ENCODE measurements at regions of chr2 and their contacts with region 1.

Region 1: DNA sequence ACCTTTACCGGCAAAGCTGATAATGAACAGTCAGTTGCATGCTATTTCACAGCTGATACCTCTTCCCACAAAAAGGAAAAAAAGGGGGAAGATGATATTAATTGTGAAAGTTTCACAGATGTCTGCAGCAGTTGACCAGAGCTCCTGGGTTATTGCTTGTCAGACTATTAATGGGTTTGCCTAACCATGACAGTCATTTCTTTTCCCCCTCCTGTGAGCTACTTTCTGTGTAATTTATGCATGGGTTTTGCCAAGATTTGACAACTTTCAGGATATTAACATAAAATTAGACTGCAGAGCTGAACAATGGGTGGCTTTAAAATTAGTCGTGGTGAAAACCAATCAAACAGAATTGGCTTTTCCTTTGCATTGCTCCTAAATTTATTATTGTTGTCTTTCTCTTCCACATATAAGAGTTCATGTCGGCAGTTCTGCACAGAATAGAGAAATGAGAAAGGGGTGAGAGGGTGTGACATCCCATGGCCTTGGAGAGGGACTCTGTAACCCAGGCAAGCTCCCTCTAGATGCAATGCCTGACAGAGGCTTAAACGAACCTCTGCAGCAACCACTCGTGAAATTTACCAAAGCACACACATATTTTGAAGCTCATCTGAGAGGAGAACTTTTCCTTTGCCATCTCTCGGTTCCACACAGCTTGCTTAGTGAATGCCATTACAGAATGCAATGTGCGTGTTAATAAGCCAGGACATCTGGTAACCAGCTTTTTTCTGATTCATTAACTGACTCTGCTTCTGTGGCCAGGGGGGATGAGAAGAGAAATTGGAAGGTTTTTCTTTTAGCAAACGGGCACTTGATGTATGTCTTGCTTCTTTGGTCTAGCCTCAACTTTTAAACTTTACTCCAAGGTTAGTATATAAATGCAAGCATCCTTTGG is 82.2 kb upstream of the ITGA4 start:
- DNase-seq: no peak
- H3K4me3 Mint-ChIP-seq: no peak overlapping the region
- H3K27ac Mint-ChIP-seq: no peak overlapping the region
- H3K4me1 Mint-ChIP-seq: peaks cover 19% of the 10 kb centered on the region
- H3K27me3 Mint-ChIP-seq: no peaks in the 10 kb centered on the region

Region 2: GRCh38 chr2:181354626-181355025 is 20.4 kb before region 1 on chr2:
- CTCF ChIA-PET with region 1: no interaction called
- POLR2A ChIA-PET with region 1: no interaction called
- DNase-seq: no peak
- H3K4me3 Mint-ChIP-seq: no peak overlapping the region
- H3K27ac Mint-ChIP-seq: no peak overlapping the region
- H3K4me1 Mint-ChIP-seq: peaks cover 10% of the 10 kb centered on the region
- H3K27me3 Mint-ChIP-seq: peaks cover 3% of the 10 kb centered on the region

Region 3: DNA sequence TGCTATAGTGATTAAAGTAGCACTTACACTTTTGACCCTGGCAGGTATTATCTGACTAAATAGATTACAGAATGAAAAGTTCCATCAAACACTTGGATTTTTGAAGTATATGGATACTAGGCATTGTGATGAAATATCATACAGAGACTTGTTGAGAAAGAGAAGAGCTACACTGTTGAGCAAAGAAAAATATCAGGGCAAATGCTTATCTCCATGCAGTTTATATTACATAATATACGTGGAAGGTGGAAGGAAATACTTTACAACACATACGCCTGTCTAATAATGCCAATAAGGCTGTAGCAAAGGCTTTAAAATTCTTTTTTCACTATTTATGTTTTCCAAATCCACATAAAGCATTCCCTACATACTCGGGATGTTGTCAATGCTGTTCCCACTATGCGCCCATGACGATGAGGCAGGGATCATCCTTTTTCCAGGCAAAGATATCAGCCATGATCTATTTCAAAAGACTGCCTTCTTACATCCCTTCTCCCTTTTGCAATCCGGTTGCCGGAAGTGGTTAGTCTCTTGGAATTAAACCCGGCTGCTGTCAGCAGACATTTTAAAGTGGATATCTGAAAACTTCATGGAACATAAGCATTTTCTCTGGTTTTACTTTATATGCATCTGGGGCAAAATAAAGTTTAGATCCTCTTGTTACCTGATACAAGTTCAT is 10.4 kb before region 1 on chr2:
- CTCF ChIA-PET with region 1: interaction called, 11 read pairs
- POLR2A ChIA-PET with region 1: no interaction called
- DNase-seq: no peak
- H3K4me3 Mint-ChIP-seq: no peak overlapping the region
- H3K27ac Mint-ChIP-seq: no peak overlapping the region
- H3K4me1 Mint-ChIP-seq: no peaks in the 10 kb centered on the region
- H3K27me3 Mint-ChIP-seq: no peaks in the 10 kb centered on the region